Adrenal gland (tissue), 19 donors: ENCODE measurements at regions of chr2 and their contacts with region 1.

Region 1: DNA sequence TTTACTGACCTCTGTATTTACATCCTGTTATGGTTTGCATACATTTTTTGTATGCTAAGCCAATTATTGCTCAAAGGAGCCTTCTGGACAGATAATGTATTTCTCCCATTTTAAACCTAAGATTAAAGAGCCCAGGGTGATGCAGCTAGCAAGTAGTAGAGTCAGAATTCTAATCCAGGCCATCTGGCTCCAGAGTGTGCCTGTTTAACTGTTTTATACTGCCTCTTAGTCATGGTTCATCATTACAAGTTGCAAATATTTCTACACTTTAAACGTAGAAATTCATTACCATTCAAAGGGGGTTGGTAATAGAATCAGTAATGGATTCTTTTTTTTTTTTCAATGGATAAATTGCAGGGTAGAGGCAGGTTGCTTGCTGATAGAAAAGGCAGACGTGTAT is 52.4 kb downstream of the EPC2 start:
- DNase-seq: no peak
- H3K4me3 ChIP-seq: no peak overlapping the region
- H3K27ac ChIP-seq: no peak overlapping the region
- H3K4me1 ChIP-seq: no peaks in the 10 kb centered on the region
- H3K27me3 ChIP-seq: no peaks in the 10 kb centered on the region
- CTCF ChIP-seq: no peak
- POLR2A ChIP-seq: no peak

Region 2: DNA sequence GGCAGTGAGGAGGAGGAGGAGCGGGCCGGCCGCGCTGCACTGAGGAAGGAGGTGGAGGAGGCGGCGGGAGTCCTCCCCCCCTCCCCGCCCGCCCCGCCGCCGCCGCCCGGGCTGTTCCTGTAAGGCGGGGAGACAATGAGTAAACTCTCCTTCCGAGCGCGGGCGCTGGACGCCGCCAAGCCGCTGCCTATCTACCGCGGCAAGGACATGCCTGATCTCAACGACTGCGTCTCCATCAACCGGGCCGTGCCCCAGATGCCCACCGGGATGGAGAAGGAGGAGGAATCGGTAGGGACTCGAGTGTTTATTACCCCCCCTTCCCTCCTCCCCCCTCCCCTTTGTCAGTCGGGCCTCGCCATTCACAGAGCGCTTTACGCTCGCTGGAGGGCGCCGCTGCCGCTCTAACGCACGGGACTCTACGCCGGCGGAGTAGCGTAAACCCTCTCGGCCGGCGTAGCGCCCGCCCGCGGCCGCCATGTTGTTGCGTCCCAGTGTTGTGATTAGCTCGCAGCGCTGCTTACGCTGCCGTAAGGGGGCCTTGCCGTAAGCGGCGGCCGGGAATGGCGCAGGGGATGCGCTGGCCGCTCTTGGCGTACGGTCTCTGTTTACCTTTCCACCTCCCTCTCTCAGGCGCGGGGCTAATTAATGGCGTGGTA is 52.0 kb before region 1 on chr2:
- intact Hi-C with region 1: loop called in 1 of 2 experiments (anchors 10 kb)
- DNase-seq: peak; percentile 92 to 97 (median 94)
- H3K4me3 ChIP-seq: peak overlapping the region; percentile 72 to 99 (median 90)
- H3K27ac ChIP-seq: peak overlapping the region; percentile 84 to 100 (median 99)
- H3K4me1 ChIP-seq: peaks cover 5 to 36% of the 10 kb centered on the region in 2 donors
- H3K27me3 ChIP-seq: no peaks in the 10 kb centered on the region
- CTCF ChIP-seq: peak; percentile 33 to 59 (median 52)
- POLR2A ChIP-seq: peak in 1 of 2 donors; percentile 17

Region 3: GRCh38 chr2:148842050-148842449 is 145.1 kb after region 1 on chr2:
- intact Hi-C with region 1: no loop called
- DNase-seq: no peak
- H3K4me3 ChIP-seq: no peak overlapping the region
- H3K27ac ChIP-seq: no peak overlapping the region
- H3K4me1 ChIP-seq: no peaks in the 10 kb centered on the region
- H3K27me3 ChIP-seq: no peaks in the 10 kb centered on the region
- CTCF ChIP-seq: no peak
- POLR2A ChIP-seq: no peak

Region 4: DNA sequence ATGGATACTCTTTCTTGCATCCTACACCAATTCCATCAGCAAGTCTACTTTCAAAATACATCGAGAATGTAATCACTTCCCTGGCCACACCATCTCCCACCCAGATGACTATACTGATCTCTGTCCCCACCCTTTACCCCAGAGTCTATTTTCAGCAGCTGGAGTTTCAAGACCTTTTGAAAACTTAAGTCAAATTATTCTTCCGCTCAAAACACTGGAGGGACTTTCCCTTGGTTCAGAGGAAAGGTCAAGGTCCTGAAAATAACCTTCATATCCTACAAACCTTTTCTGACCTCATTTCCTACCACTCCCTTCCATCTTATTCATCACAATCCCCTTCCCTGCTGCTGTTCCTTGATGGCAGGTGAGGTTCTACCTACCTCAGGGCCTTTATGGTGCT is 574.6 kb after region 1 on chr2:
- intact Hi-C with region 1: no loop called
- DNase-seq: no peak
- H3K4me3 ChIP-seq: no peak overlapping the region
- H3K27ac ChIP-seq: no peak overlapping the region
- H3K4me1 ChIP-seq: no peaks in the 10 kb centered on the region
- H3K27me3 ChIP-seq: no peaks in the 10 kb centered on the region
- CTCF ChIP-seq: no peak
- POLR2A ChIP-seq: no peak